ENCODE measurements at regions of chr9 and their contacts with region 1.

Region 1: GRCh38 chr9:6757456-6758247 is at the start of gene KDM4C:
- DNase-seq: peak; percentile 95
- H3K4me3 ChIP-seq: peak within 1 kb of the TSS; percentile 63 to 94 (median 85)
- H3K27ac ChIP-seq: peak within 1 kb of the TSS; percentile 96 to 99 (median 98)
- H3K4me1 ChIP-seq: peaks cover 3 to 14% (median 8%) of the 10 kb centered on the region in 4 donors
- H3K27me3 ChIP-seq: no peaks in the 10 kb centered on the region
- CTCF ChIP-seq: no peak
- EP300 ChIP-seq: peak; percentile 34
- POLR2A ChIP-seq: peak; percentile 96
- total RNA-seq, gene KDM4C: 75.0 to 95.9 (median 88.9) TPM

Region 2: DNA sequence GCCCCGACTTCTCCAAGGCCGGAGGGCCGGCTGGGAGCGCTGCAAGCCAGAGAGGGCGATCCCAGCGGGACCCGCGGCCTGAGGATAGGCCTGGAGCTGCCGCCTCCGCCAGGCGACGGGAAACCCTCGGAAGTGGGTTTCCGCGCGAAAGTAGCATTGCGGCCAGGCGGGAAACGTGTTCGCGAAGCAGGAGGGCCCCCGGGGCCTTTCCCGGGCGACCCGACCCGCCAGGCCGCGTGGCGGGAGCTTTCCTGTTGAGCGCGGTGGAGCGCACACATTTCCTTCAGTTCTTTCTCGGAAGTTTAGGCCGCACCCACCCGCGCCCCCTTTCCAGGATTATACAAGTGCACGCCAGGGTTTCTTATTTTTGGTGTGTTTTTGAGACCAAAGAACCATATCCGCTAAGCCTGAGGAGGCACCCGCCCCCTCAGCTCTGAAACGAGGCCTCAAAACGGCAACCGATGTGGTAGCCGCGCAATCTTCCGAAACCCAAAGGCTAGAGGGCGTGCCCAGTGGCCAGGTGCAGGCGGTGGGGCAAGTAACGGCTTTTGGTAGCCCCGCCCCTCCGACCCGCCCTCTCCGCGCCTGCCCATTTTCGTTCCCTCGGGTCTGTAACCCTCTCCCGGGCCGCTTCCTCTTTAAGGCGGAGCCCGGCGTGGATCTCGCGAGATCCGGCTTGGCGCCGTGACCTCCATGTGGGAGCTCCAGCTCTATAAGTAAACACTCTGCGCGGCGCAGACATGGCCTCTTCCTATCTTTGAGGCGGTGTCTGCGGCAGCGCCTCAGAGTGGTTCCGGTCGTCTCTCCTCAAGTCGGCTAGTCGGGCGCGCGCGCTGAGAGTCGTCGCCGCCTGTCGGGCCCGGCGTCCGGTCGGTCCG is 344.9 kb before region 1 on chr9 and contains the start of gene UHRF2:
- in situ Hi-C with region 1: no loop called
- intact Hi-C with region 1: loop called (anchors 2 kb)
- DNase-seq: peak; percentile 99
- H3K4me3 ChIP-seq: peak within 1 kb of the TSS; percentile 39 to 98 (median 80)
- H3K27ac ChIP-seq: peak within 1 kb of the TSS; percentile 82 to 94 (median 88)
- H3K4me1 ChIP-seq: peaks cover 8 to 35% (median 16%) of the 10 kb centered on the region in 4 donors
- H3K27me3 ChIP-seq: no peaks in the 10 kb centered on the region
- CTCF ChIP-seq: no peak
- EP300 ChIP-seq: no peak
- POLR2A ChIP-seq: peak; percentile 85
- total RNA-seq, gene UHRF2: 40.8 to 64.0 (median 51.4) TPM

Region 3: GRCh38 chr9:6681147-6681956 is 76.3 kb before region 1 on chr9:
- in situ Hi-C with region 1: loop called in 1 of 4 experiments (anchors 10 kb)
- intact Hi-C with region 1: no loop called
- DNase-seq: peak; percentile 97
- H3K4me3 ChIP-seq: peak overlapping the region; percentile 44 to 74 (median 64)
- H3K27ac ChIP-seq: peak overlapping the region; percentile 93 to 97 (median 96)
- H3K4me1 ChIP-seq: peaks cover 0 to 14% (median 9%) of the 10 kb centered on the region in 4 donors
- H3K27me3 ChIP-seq: no peaks in the 10 kb centered on the region
- CTCF ChIP-seq: peak in 1 of 5 experiments; percentile 19
- EP300 ChIP-seq: no peak
- POLR2A ChIP-seq: peak; percentile 90

Measured in transverse colon (tissue), 4 donors.